Activated CD4-positive, alpha-beta T cell treated with anti-CD3 and anti-CD28 coated beads for 36 hours (primary cell): ENCODE measurements at regions of chr17 and their contacts with region 1.

Region 1: GRCh38 chr17:79749156-79749815 is 18.5 kb downstream of the ENPP7 start:
- DNase-seq: no peak
- ATAC-seq: no peak
- H3K4me3 Mint-ChIP-seq: no peak overlapping the region
- H3K27ac Mint-ChIP-seq: no peak overlapping the region
- H3K4me1 Mint-ChIP-seq: peaks cover 25% of the 10 kb centered on the region
- H3K27me3 Mint-ChIP-seq: peaks cover 39% of the 10 kb centered on the region

Region 2: DNA sequence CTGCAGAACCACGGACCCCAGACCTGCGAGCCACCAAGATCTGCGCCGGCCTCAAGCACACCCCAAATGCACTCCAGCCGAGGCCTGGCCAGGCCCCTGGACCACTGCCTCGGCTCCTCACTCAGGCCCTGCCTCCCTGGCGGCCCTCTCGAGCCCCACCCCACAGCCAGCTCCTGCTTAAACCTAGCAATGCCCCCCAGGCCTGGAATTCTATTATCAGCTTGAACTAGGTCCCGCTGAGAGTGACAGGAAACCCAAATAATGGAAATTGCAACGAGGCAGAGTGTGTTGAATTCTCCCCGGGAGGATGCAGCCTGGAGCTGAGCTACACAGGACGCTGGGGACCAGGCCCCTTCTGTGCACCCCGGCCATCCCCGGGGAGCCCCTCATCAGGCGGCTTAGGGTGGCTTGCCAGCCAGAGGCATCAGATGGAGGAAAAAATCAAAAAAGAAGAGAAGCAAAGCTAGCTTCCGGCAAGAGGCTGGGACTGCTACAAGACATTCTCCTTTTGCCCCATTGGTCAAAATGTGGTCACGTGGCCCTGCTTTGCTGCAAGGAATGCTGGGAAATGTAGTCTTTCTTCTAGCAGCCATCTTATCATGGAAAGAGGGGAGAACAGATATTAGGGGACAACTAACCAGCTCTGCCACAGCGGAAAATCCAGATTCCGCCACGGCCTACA is 20.9 kb before region 1 on chr17:
- CTCF ChIA-PET with region 1: interaction called, 11 read pairs
- POLR2A ChIA-PET with region 1: no interaction called
- intact Hi-C with region 1: no loop called
- DNase-seq: peak; percentile 91
- ATAC-seq: peak; percentile 90
- H3K4me3 Mint-ChIP-seq: peak overlapping the region; percentile 63
- H3K27ac Mint-ChIP-seq: peak overlapping the region; percentile 75
- H3K4me1 Mint-ChIP-seq: peaks cover 4% of the 10 kb centered on the region
- H3K27me3 Mint-ChIP-seq: no peaks in the 10 kb centered on the region

Region 3: DNA sequence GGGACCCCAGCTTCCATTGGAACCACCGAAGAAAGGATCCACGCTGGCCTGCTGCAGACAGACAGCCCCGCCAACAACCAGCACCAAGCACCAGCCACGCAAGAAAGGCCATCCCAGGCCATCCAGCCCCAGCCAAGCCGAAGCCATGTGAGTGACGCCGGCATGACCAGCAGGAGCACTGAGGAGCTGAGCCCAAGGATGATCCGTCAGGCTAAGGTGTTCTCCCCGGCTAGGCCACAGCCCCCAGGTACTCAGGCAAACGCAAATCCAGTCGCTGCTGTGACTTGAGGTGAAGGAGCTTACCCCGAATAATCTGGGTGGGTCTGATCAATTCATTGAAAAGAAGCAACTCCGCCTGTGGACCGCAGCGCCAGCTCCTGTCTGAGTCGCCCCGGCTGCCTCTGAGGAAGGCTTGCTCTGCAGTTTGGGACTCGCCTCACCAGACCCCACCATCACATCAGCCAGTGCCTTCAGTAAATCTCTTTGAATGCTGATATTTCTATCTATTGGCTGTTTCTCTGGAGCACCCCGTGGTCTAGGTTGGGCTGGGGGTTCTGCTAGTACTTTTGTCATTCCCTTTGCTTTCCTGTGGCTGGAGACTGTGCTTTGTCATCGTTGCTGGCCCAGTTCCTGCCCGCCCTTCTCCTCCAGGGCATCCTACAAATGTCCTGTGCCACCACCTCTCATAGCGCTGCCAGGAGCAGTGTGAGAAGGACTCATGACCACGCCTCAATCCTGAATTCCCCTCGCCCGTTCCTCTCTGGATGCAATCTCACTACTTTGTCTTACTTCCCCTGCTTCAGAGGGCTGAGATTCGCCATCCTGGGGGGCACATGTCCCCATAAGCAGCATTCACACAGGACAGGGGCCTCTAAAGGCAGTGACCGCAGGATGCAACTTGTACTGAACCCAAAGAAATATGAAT is 20.6 kb after region 1 on chr17:
- CTCF ChIA-PET with region 1: interaction called, 10 read pairs
- POLR2A ChIA-PET with region 1: no interaction called
- intact Hi-C with region 1: no loop called
- DNase-seq: no peak
- ATAC-seq: no peak
- H3K4me3 Mint-ChIP-seq: no peak overlapping the region
- H3K27ac Mint-ChIP-seq: no peak overlapping the region
- H3K4me1 Mint-ChIP-seq: no peaks in the 10 kb centered on the region
- H3K27me3 Mint-ChIP-seq: peaks cover 23% of the 10 kb centered on the region

Region 4: GRCh38 chr17:79777894-79778503 is 28.7 kb after region 1 on chr17 and contains the start of gene CBX2:
- CTCF ChIA-PET with region 1: interaction called, 10 read pairs
- POLR2A ChIA-PET with region 1: no interaction called
- intact Hi-C with region 1: loop called in 1 of 2 experiments (anchors 1 kb)
- DNase-seq: peak; percentile 90
- ATAC-seq: peak; percentile 84
- H3K4me3 Mint-ChIP-seq: peak within 1 kb of the TSS; percentile 77
- H3K27ac Mint-ChIP-seq: peak within 1 kb of the TSS; percentile 76
- H3K4me1 Mint-ChIP-seq: peaks cover 17% of the 10 kb centered on the region
- H3K27me3 Mint-ChIP-seq: peaks cover 64% of the 10 kb centered on the region
- total RNA-seq, gene CBX2: 4.2 to 4.3 TPM

Region 5: GRCh38 chr17:79810130-79811010 is 61.1 kb after region 1 on chr17:
- CTCF ChIA-PET with region 1: interaction called, 10 read pairs
- POLR2A ChIA-PET with region 1: no interaction called
- intact Hi-C with region 1: loop called (anchors 2 to 5 kb)
- DNase-seq: peak; percentile 90
- ATAC-seq: peak; percentile 90
- H3K4me3 Mint-ChIP-seq: peak overlapping the region; percentile 18
- H3K27ac Mint-ChIP-seq: no peak overlapping the region
- H3K4me1 Mint-ChIP-seq: peaks cover 39% of the 10 kb centered on the region
- H3K27me3 Mint-ChIP-seq: peaks cover 59% of the 10 kb centered on the region

Region 6: GRCh38 chr17:79915850-79916430 is 166.7 kb after region 1 on chr17:
- CTCF ChIA-PET with region 1: interaction called, 4 read pairs
- POLR2A ChIA-PET with region 1: no interaction called
- intact Hi-C with region 1: loop called in 1 of 2 experiments (anchors 5 kb)
- DNase-seq: peak; percentile 51
- ATAC-seq: no peak
- H3K4me3 Mint-ChIP-seq: no peak overlapping the region
- H3K27ac Mint-ChIP-seq: no peak overlapping the region
- H3K4me1 Mint-ChIP-seq: no peaks in the 10 kb centered on the region
- H3K27me3 Mint-ChIP-seq: peaks cover 2% of the 10 kb centered on the region